MCF 10A (cell line): ENCODE measurements at regions of chr21 and their contacts with region 1.

Region 1: GRCh38 chr21:39518138-39518846 is 66.5 kb downstream of the SH3BGR start:
- DNase-seq: peak; percentile 61
- H3K4me3 Mint-ChIP-seq: no peak overlapping the region
- H3K27ac Mint-ChIP-seq: peak overlapping the region; percentile 76
- H3K4me1 Mint-ChIP-seq: peaks cover 16% of the 10 kb centered on the region
- H3K27me3 Mint-ChIP-seq: no peaks in the 10 kb centered on the region
- CTCF ChIP-seq: peak; percentile 91

Region 2: GRCh38 chr21:39467746-39468145 is 50.5 kb before region 1 on chr21:
- CTCF ChIA-PET with region 1: no interaction called
- POLR2A ChIA-PET with region 1: no interaction called
- intact Hi-C with region 1: no loop called
- DNase-seq: no peak
- H3K4me3 Mint-ChIP-seq: no peak overlapping the region
- H3K27ac Mint-ChIP-seq: no peak overlapping the region
- H3K4me1 Mint-ChIP-seq: no peaks in the 10 kb centered on the region
- H3K27me3 Mint-ChIP-seq: no peaks in the 10 kb centered on the region
- CTCF ChIP-seq: no peak

Region 3: DNA sequence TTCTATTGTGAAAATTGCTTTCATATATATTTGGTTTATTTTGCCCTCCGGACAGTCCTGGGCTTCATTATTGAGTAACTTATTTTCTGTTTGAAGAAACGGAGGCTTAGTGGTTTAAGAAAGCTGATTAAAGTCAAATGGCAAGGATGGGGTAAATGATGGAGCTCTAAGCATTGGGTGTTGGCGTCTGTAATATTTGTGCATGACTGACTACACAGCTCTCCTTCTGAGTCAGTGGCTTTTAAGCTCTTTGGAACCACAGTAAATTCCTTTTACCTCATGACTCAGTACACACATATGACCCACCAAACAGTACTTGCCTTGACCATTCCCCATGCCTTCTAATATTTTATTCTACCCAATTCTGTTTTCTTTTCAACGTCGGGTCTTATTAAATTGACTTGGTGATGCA is 115.5 kb after region 1 on chr21:
- CTCF ChIA-PET with region 1: interaction called, 13 read pairs
- POLR2A ChIA-PET with region 1: interaction called, 3 read pairs
- intact Hi-C with region 1: loop called (anchors 2 kb)
- DNase-seq: peak; percentile 51
- H3K4me3 Mint-ChIP-seq: peak overlapping the region; percentile 17
- H3K27ac Mint-ChIP-seq: peak overlapping the region; percentile 80
- H3K4me1 Mint-ChIP-seq: peaks cover 43% of the 10 kb centered on the region
- H3K27me3 Mint-ChIP-seq: no peaks in the 10 kb centered on the region
- CTCF ChIP-seq: no peak

Region 4: DNA sequence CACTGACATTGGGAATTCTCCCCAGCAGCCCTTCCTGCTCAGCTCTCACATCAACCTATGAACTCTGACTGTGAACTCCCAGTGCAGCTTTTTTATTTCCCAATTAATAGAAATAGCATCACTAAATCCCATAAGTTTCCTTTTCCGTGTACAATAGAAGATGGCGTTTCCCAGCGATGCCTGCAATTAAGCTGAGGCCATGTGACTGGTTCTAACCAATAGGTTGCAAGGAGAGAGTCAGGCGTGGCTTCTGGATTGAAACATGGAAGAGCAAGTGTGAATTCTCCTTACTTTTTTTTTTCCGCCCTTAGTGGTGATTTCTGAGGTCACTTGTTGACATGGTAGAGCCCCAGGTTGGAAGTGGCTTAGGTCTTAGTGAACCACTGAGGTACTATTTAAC is 167.7 kb after region 1 on chr21:
- CTCF ChIA-PET with region 1: interaction called, 10 read pairs
- POLR2A ChIA-PET with region 1: no interaction called
- intact Hi-C with region 1: no loop called
- DNase-seq: no peak
- H3K4me3 Mint-ChIP-seq: no peak overlapping the region
- H3K27ac Mint-ChIP-seq: no peak overlapping the region
- H3K4me1 Mint-ChIP-seq: peaks cover 8% of the 10 kb centered on the region
- H3K27me3 Mint-ChIP-seq: no peaks in the 10 kb centered on the region
- CTCF ChIP-seq: no peak

Region 5: GRCh38 chr21:39705849-39706248 is 187.6 kb after region 1 on chr21:
- CTCF ChIA-PET with region 1: interaction called, 224 read pairs
- POLR2A ChIA-PET with region 1: interaction called, 3 read pairs
- intact Hi-C with region 1: loop called (anchors 2 kb)
- DNase-seq: no peak
- H3K4me3 Mint-ChIP-seq: no peak overlapping the region
- H3K27ac Mint-ChIP-seq: no peak overlapping the region
- H3K4me1 Mint-ChIP-seq: peaks cover 6% of the 10 kb centered on the region
- H3K27me3 Mint-ChIP-seq: peaks cover 9% of the 10 kb centered on the region
- CTCF ChIP-seq: no peak